ENCODE measurements at regions of chr6 and their contacts with region 1.

Region 1: GRCh38 chr6:166402582-166403277 is 20.0 kb upstream of the MPC1 start:
- DNase-seq: no peak
- ATAC-seq: no peak
- H3K4me3 ChIP-seq: no peak overlapping the region
- H3K4me3 Mint-ChIP-seq: no peak overlapping the region
- H3K27ac ChIP-seq: no peak overlapping the region
- H3K27ac Mint-ChIP-seq: no peak overlapping the region
- H3K4me1 ChIP-seq: peaks cover 8% of the 10 kb centered on the region
- H3K4me1 Mint-ChIP-seq: no peaks in the 10 kb centered on the region
- H3K27me3 ChIP-seq: no peaks in the 10 kb centered on the region
- H3K27me3 Mint-ChIP-seq: no peaks in the 10 kb centered on the region
- CTCF ChIP-seq: no peak

Region 2: DNA sequence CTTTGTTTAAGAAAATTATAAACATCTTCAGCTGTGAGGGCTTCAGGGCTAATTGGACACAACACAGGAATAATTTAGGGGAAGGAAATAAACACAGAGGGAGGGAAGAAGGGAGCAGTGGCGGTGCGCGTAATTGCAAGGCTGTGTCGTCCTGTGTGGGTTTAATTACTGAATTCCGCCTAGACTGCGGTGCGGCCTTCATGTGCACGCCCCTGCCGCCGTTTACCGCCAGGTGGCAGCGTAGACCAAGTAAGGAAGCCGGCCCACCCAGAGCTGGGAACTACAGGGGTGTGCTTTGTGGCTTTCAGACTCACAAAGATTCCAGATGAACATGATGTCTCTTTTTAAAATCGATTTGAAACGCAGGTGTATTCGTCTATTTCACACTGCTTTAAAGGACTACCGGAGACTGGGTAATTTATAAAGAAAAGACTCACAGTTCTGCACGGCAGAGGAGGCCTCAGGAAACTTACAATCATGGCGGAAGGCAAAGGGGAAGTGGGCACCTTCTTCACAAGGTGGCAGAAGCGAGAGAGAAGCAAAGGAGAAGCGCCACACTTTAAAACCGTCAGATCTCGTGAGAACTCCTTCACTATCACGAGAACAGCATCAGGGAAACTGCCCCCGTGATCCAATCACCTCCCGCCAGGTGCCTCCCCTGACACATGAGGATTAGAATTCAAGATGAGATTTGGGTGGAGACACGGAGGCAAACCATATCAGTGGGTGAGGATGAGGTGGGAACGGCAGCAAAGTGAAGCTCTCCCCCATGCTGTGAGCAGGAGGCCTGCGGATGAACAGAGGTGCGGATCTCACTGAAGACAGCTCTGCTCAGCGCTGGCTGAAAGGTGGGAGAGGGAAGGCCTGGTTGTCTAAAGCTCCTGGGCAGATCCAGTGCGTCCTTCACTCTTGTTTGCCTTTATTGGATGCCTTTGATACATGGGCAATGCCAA is 517.6 kb before region 1 on chr6:
- CTCF ChIA-PET with region 1: interaction called, 3 read pairs
- POLR2A ChIA-PET with region 1: no interaction called
- intact Hi-C with region 1: loop called in 1 of 2 experiments (anchors 10 kb)
- DNase-seq: peak; percentile 12 to 71 (median 44)
- ATAC-seq: peak; percentile 70
- H3K4me3 ChIP-seq: no peak overlapping the region
- H3K4me3 Mint-ChIP-seq: peak overlapping the region; percentile 28
- H3K27ac ChIP-seq: no peak overlapping the region
- H3K27ac Mint-ChIP-seq: no peak overlapping the region
- H3K4me1 ChIP-seq: peaks cover 4% of the 10 kb centered on the region
- H3K4me1 Mint-ChIP-seq: peaks cover 9% of the 10 kb centered on the region
- H3K27me3 ChIP-seq: no peaks in the 10 kb centered on the region
- H3K27me3 Mint-ChIP-seq: peaks cover 41% of the 10 kb centered on the region
- CTCF ChIP-seq: peak; percentile 50

Region 3: DNA sequence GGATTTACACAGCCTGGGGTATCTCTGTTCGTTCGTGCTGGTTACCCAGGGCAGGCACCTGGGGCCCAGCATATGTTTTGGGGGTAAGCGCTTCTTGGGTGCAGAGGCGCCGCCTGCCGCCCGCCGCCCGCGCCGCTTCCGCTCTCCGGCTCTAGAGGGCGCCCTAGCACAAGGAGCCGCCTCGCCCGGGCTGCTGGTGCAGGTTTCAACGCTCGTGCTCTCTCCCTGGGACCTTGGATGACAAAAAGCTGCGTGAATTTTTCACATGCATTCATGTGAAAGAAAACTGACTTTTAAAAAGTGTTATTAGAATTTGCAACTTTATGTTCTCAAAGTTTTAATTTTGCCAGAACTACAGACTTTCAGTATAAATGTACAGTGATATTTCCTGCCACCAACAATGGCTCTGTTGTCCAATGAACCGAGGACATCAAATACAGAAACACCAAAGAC is 127.0 kb before region 1 on chr6:
- CTCF ChIA-PET with region 1: interaction called, 12 read pairs
- POLR2A ChIA-PET with region 1: no interaction called
- intact Hi-C with region 1: loop called (anchors 1 kb)
- DNase-seq: peak; percentile 47 to 91 (median 80)
- ATAC-seq: peak; percentile 96
- H3K4me3 ChIP-seq: no peak overlapping the region
- H3K4me3 Mint-ChIP-seq: no peak overlapping the region
- H3K27ac ChIP-seq: no peak overlapping the region
- H3K27ac Mint-ChIP-seq: no peak overlapping the region
- H3K4me1 ChIP-seq: peaks cover 10% of the 10 kb centered on the region
- H3K4me1 Mint-ChIP-seq: peaks cover 8% of the 10 kb centered on the region
- H3K27me3 ChIP-seq: no peaks in the 10 kb centered on the region
- H3K27me3 Mint-ChIP-seq: peaks cover 8% of the 10 kb centered on the region
- CTCF ChIP-seq: peak; percentile 98

Region 4: GRCh38 chr6:166313255-166314070 is 89.3 kb before region 1 on chr6:
- CTCF ChIA-PET with region 1: interaction called, 21 read pairs
- POLR2A ChIA-PET with region 1: no interaction called
- intact Hi-C with region 1: loop called (anchors 1 kb)
- DNase-seq: peak in 13 of 14 experiments; percentile 23 to 79 (median 44)
- ATAC-seq: peak; percentile 99
- H3K4me3 ChIP-seq: no peak overlapping the region
- H3K4me3 Mint-ChIP-seq: no peak overlapping the region
- H3K27ac ChIP-seq: no peak overlapping the region
- H3K27ac Mint-ChIP-seq: no peak overlapping the region
- H3K4me1 ChIP-seq: peaks cover 2% of the 10 kb centered on the region
- H3K4me1 Mint-ChIP-seq: no peaks in the 10 kb centered on the region
- H3K27me3 ChIP-seq: peaks cover 12 to 21% of the 10 kb centered on the region in 2 experiments
- H3K27me3 Mint-ChIP-seq: peaks cover 23% of the 10 kb centered on the region
- CTCF ChIP-seq: peak; percentile 78